ENCODE measurements at regions of chr5 and their contacts with region 1.

Region 1: DNA sequence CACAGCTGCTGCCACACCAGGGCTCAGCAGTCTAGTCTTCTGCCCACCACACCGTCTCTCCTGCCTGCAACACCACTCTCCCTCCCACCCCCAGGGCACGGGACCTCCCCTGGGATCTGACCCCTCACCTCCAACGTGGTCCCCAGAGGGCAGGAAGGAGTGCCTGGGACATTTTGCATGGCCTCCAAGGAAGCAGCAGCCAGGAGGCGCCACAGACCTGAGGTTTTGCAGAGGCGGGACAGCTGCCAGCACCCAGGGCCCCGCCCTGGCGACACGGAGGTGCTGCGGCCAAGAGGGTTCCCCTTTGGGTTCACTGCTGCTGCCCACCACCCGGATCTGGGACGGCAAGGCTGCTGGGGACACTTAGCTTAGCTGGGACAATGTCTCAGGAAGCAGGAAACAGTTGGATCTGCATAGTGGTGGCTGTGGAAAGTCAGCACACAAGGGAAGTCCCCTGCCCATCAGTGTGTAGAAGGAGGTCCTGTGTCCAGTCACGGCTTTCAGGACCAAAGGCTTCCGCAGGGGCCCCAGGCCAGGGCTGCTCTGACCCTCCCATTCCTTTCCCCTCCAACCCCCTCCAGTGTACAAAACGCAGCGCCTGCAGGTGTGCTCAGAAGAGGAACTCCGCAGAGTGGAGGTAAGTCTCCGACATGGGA is 13.8 kb downstream of the PROP1 start:
- DNase-seq: peak; percentile 60
- H3K4me3 Mint-ChIP-seq: no peak overlapping the region
- H3K27ac Mint-ChIP-seq: no peak overlapping the region
- H3K4me1 Mint-ChIP-seq: no peaks in the 10 kb centered on the region
- H3K27me3 Mint-ChIP-seq: peaks cover 53% of the 10 kb centered on the region
- CTCF ChIP-seq: peak; percentile 32

Region 2: DNA sequence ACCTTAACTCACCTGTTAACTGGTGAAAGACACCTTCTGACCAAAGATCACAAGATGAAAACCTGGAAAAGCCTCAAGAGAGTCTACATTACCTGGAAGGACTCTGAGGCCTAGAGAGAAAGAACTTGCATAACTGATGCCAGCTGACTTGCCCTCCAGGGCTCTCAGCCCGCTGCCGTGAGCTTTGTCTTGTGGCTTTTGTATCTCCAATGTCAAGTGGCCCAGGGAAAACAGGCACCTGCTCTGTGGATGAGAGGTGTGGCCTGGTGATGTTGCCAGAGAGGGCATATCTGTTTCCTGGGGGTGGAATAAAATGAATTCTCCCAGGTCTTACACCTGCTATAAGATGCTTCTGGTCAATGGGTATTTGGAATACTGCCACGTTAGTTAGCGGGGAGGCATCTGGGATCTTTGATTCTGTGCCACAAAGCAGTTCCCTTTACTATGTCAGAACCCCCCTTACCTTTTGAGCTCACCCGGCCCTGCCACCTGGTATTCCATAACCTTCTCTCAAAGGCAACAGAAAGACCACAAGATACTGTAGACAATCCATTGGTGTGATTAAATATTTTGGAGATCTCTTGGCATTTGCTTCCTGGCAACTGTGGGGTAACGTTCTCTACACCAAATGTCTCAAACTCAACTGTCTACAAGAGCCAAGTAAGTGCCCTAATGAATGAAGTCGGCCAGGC is 76.3 kb after region 1 on chr5:
- CTCF ChIA-PET with region 1: interaction called, 3 read pairs
- intact Hi-C with region 1: loop called (anchors 1 kb)
- DNase-seq: no peak
- H3K4me3 Mint-ChIP-seq: no peak overlapping the region
- H3K27ac Mint-ChIP-seq: no peak overlapping the region
- H3K4me1 Mint-ChIP-seq: no peaks in the 10 kb centered on the region
- H3K27me3 Mint-ChIP-seq: peaks cover 74% of the 10 kb centered on the region
- CTCF ChIP-seq: no peak

Measured in Calu3 (cell line).